Transverse colon (tissue), 4 donors: ENCODE measurements at regions of chr16 and their contacts with region 1.

Region 1: GRCh38 chr16:57178793-57179212 is 7.0 kb downstream of the PSME3IP1 start:
- DNase-seq: no peak
- H3K4me3 ChIP-seq: no peak overlapping the region
- H3K27ac ChIP-seq: no peak overlapping the region
- H3K4me1 ChIP-seq: peaks cover 0 to 4% (median 0%) of the 10 kb centered on the region in 4 donors
- H3K27me3 ChIP-seq: no peaks in the 10 kb centered on the region
- CTCF ChIP-seq: no peak
- EP300 ChIP-seq: no peak
- POLR2A ChIP-seq: no peak

Region 2: GRCh38 chr16:55349867-55350266 is 1828.9 kb before region 1 on chr16:
- in situ Hi-C with region 1: no loop called
- intact Hi-C with region 1: loop called (anchors 10 kb)
- DNase-seq: no peak
- H3K4me3 ChIP-seq: no peak overlapping the region
- H3K27ac ChIP-seq: no peak overlapping the region
- H3K4me1 ChIP-seq: no peaks in the 10 kb centered on the region
- H3K27me3 ChIP-seq: no peaks in the 10 kb centered on the region
- CTCF ChIP-seq: no peak
- EP300 ChIP-seq: no peak
- POLR2A ChIP-seq: no peak

Region 3: DNA sequence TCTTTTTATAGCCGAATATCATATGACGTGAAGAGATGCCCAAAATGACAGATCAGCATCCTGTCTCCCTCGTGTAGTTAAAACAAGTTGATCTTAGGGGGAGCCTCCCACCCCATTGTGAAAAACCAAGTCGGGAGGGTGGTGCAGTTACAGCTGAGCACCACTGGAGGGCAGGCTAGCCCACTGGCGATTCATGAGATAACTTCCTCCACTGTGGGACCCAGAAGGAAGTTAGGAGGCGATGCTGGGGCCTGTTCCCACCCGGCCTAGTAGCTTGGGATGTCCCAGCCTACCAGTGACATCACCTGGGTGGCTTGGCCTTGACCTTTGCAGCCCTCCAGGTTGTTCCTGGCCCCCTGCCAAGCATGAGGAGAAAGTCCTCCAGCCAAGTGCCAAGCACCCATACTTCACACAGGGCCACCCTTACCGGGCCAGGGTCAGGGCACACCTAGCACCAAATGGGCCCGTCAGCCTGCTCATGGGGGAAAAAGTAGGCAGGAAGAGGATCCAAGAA is 94.5 kb before region 1 on chr16:
- in situ Hi-C with region 1: loop called in 3 of 4 experiments (anchors 5 to 10 kb)
- intact Hi-C with region 1: no loop called
- DNase-seq: peak; percentile 72
- H3K4me3 ChIP-seq: no peak overlapping the region
- H3K27ac ChIP-seq: peak overlapping the region in 2 of 4 donors; percentile 0 to 28
- H3K4me1 ChIP-seq: peaks cover 0 to 7% (median 3%) of the 10 kb centered on the region in 4 donors
- H3K27me3 ChIP-seq: no peaks in the 10 kb centered on the region
- CTCF ChIP-seq: peak; percentile 97 to 99 (median 99)
- EP300 ChIP-seq: no peak
- POLR2A ChIP-seq: no peak

Region 4: DNA sequence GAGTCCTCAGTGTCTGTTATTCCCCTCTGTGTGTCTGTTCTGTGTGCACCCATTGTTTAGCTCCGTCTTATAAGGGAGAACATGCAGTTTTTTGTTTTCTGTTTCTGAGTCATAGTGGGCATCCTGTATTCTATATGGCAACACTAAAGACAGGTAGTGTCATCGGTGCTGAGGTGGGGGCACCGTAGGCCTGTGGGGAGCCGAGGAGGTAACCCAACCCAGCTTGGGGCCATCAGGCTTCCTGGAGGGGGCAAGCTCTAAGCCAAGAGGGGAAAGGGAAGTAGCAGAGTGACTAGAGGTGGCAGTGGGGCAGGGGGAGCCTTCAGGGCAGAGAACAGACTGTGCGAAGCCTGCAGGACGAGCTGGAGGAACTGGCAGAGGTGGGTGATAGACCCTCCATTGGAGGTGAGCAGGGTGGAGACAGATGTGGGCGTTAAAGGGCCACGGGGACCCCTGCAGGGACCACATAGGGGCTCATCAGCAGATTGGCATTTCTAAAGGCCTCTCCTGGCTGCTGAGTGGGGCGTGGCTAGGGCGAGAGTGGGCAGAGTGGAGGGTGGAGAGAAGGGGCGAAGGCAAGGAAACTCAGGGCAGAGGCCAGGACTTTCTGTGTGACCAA is 49.9 kb before region 1 on chr16:
- in situ Hi-C with region 1: no loop called
- intact Hi-C with region 1: no loop called
- DNase-seq: no peak
- H3K4me3 ChIP-seq: no peak overlapping the region
- H3K27ac ChIP-seq: no peak overlapping the region
- H3K4me1 ChIP-seq: peaks cover 17 to 35% (median 30%) of the 10 kb centered on the region in 4 donors
- H3K27me3 ChIP-seq: no peaks in the 10 kb centered on the region
- CTCF ChIP-seq: no peak
- EP300 ChIP-seq: no peak
- POLR2A ChIP-seq: no peak

Region 5: GRCh38 chr16:58077853-58078252 is 899.0 kb after region 1 on chr16:
- in situ Hi-C with region 1: no loop called
- intact Hi-C with region 1: no loop called
- DNase-seq: no peak
- H3K4me3 ChIP-seq: no peak overlapping the region
- H3K27ac ChIP-seq: no peak overlapping the region
- H3K4me1 ChIP-seq: no peaks in the 10 kb centered on the region
- H3K27me3 ChIP-seq: no peaks in the 10 kb centered on the region
- CTCF ChIP-seq: no peak
- EP300 ChIP-seq: no peak
- POLR2A ChIP-seq: no peak

Region 6: DNA sequence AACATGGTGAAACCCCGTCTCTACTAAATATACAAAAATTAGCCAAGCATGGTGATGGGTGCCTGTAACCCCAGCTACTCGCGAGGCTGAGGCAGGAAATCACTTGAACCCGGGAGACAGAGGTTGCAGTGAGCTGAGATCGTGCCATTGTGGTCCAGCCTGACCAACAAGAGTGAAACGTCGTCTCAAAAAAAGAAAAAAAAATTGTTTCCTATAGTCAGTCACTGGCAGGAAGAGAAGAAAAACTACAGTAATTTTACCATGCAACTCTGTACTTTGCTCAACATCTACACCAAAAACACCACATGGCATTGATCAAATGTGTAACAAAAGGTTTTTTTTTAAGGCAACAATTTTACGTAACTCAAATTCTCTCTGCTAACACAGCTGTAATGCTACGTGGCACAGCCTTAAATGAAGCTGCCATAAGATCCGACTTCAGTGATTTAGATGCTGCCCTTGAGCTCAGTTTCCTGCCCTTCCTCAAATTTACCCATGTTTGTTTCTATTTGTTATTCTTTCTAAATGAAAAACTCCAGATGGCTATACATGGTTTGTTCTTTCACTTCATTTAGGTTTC is 1410.6 kb after region 1 on chr16:
- in situ Hi-C with region 1: no loop called
- intact Hi-C with region 1: no loop called
- DNase-seq: no peak
- H3K4me3 ChIP-seq: no peak overlapping the region
- H3K27ac ChIP-seq: no peak overlapping the region
- H3K4me1 ChIP-seq: no peaks in the 10 kb centered on the region
- H3K27me3 ChIP-seq: no peaks in the 10 kb centered on the region
- CTCF ChIP-seq: no peak
- EP300 ChIP-seq: no peak
- POLR2A ChIP-seq: no peak